ENCODE measurements at regions of chr15 and their contacts with region 1.

Region 1: GRCh38 chr15:66707310-66708082 is 5.5 kb downstream of the SMAD6 start:
- DNase-seq: peak; percentile 62 to 86
- H3K4me3 ChIP-seq: peak overlapping the region; percentile 4 to 97 (median 82)
- H3K27ac ChIP-seq: peak overlapping the region; percentile 37 to 90 (median 75)
- H3K4me1 ChIP-seq: peaks cover 40 to 78% (median 67%) of the 10 kb centered on the region in 4 donors
- H3K27me3 ChIP-seq: peaks cover 0 to 20% (median 0%) of the 10 kb centered on the region in 3 donors
- CTCF ChIP-seq: no peak
- EP300 ChIP-seq: no peak
- POLR2A ChIP-seq: no peak

Region 2: GRCh38 chr15:66774001-66774814 is 66.7 kb after region 1 on chr15:
- intact Hi-C with region 1: loop called (anchors 5 kb)
- DNase-seq: peak; percentile 92 to 95
- H3K4me3 ChIP-seq: no peak overlapping the region
- H3K27ac ChIP-seq: peak overlapping the region; percentile 57 to 88 (median 84)
- H3K4me1 ChIP-seq: peaks cover 61 to 85% (median 76%) of the 10 kb centered on the region in 4 donors
- H3K27me3 ChIP-seq: no peaks in the 10 kb centered on the region
- CTCF ChIP-seq: peak in 6 of 7 experiments; percentile 89 to 99 (median 96)
- EP300 ChIP-seq: no peak
- POLR2A ChIP-seq: no peak